Activated CD4-positive, alpha-beta memory T cell treated with anti-CD3 and anti-CD28 coated beads for 36 hours (primary cell): ENCODE measurements at regions of chr2 and their contacts with region 1.

Region 1: GRCh38 chr2:9984217-9984739 is 32.8 kb downstream of the GRHL1 start:
- DNase-seq: peak; percentile 52
- H3K4me3 Mint-ChIP-seq: no peak overlapping the region
- H3K27ac Mint-ChIP-seq: peak overlapping the region; percentile 15
- H3K4me1 Mint-ChIP-seq: peaks cover 16% of the 10 kb centered on the region
- H3K27me3 Mint-ChIP-seq: peaks cover 5% of the 10 kb centered on the region

Region 2: GRCh38 chr2:9030841-9031240 is 953.4 kb before region 1 on chr2:
- CTCF ChIA-PET with region 1: no interaction called
- POLR2A ChIA-PET with region 1: no interaction called
- intact Hi-C with region 1: no loop called
- DNase-seq: no peak
- H3K4me3 Mint-ChIP-seq: no peak overlapping the region
- H3K27ac Mint-ChIP-seq: no peak overlapping the region
- H3K4me1 Mint-ChIP-seq: peaks cover 5% of the 10 kb centered on the region
- H3K27me3 Mint-ChIP-seq: peaks cover 30% of the 10 kb centered on the region

Region 3: GRCh38 chr2:9843229-9844035 is 140.8 kb before region 1 on chr2 and contains the start of gene TAF1B:
- CTCF ChIA-PET with region 1: interaction called, 5 read pairs
- POLR2A ChIA-PET with region 1: no interaction called
- intact Hi-C with region 1: loop called (anchors 5 kb)
- DNase-seq: peak; percentile 92
- H3K4me3 Mint-ChIP-seq: peak within 1 kb of the TSS; percentile 91
- H3K27ac Mint-ChIP-seq: peak within 1 kb of the TSS; percentile 89
- H3K4me1 Mint-ChIP-seq: peaks cover 42% of the 10 kb centered on the region
- H3K27me3 Mint-ChIP-seq: no peaks in the 10 kb centered on the region
- total RNA-seq, gene TAF1B: 32.6 TPM

Region 4: DNA sequence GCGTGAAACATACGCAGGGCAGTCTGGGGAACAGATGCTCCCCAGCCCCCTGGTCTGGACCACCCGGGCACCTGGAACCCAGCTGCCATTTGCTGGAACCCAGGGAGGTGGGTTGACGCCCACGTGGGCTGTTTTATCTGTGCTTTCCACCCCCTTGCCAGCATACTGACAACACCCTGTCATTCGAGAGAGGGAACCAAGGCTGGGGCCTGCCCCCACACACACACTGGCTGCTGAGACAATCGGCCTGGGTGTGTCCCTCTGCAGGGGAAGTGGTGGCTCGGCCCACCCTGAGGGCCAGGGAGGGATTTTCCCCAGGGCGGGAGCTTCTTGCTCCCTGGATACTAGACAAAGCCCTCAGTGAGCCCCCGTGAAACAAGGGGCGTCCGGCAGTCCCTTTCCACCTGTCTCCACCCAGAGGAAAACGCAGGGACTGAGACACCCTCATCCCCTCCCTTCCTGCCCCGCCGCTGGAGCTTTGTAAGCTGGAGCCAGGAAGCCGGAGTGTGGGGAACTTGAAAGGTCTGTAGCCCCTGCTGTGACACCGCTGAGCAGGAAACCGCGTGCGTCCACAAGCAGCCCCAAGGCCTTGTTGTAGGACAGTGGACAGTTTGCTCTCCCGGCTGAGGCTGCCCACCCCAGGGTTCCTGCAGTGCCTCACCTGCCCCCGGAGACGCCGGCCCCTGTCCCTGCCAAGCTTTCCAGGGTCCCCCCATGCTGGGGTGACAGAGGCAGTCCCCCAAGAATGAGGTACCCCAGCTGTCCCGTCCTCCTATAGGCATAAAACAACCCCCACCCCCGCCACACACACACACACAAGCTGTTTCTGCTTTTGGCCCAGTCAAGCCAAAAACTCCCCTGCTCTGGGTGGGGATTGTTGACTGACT is 45.0 kb after region 1 on chr2:
- CTCF ChIA-PET with region 1: interaction called, 44 read pairs
- POLR2A ChIA-PET with region 1: no interaction called
- intact Hi-C with region 1: no loop called
- DNase-seq: peak; percentile 73
- H3K4me3 Mint-ChIP-seq: no peak overlapping the region
- H3K27ac Mint-ChIP-seq: no peak overlapping the region
- H3K4me1 Mint-ChIP-seq: peaks cover 19% of the 10 kb centered on the region
- H3K27me3 Mint-ChIP-seq: no peaks in the 10 kb centered on the region

Region 5: DNA sequence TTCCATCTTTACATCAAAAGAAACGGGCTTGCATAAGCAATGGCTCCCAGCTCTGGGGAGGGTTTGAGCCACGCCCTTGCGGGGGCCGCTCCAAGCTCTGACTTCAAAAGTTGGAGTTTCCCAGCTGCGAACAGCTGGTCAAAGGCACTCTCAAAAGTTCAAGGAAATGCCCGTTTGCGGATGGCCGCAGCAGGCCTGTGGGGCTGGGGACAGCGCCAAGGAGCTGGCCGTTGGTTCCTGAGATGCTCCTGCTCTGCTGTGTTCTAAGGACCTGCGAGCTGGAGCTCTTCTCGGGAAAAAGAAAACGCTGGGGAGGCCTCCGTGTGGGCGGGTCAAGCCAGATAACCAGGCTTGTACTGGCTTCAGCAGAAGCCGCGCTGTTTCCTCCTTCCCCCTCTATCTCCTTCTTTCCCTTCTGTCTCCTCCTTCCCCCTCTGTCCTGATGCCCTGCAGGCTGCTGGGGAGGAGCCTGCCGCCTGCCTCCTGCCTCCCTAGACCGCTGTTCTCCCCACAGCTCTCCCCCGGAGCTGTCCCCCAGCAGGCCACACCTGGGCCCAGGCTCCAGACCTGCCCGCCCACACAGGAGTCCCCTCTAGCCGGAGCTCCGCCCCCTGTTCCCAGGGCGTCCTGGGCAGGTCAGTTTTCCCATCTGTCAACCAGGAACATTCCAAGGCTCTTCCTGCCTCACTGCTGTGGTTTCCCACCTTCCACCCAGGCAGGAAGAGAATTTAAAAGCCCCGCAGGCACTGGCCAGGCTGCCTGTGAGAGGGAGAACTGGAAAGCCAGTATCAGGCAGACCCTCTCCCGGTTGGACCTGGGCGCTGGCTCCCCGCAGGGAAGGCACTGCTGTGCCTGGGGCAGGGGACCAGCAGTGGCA is 73.2 kb after region 1 on chr2:
- CTCF ChIA-PET with region 1: interaction called, 149 read pairs
- POLR2A ChIA-PET with region 1: no interaction called
- intact Hi-C with region 1: no loop called
- DNase-seq: peak; percentile 56
- H3K4me3 Mint-ChIP-seq: peak overlapping the region; percentile 1
- H3K27ac Mint-ChIP-seq: no peak overlapping the region
- H3K4me1 Mint-ChIP-seq: peaks cover 1% of the 10 kb centered on the region
- H3K27me3 Mint-ChIP-seq: no peaks in the 10 kb centered on the region